ENCODE measurements at regions of chr3 and their contacts with region 1.

Region 1: GRCh38 chr3:183527428-183528379 is 27.8 kb downstream of the KLHL6 start:
- DNase-seq: peak; percentile 60
- ATAC-seq: peak; percentile 89
- H3K4me3 Mint-ChIP-seq: peak overlapping the region; percentile 43
- H3K27ac Mint-ChIP-seq: peak overlapping the region; percentile 84
- H3K4me1 Mint-ChIP-seq: peaks cover 43% of the 10 kb centered on the region
- H3K27me3 Mint-ChIP-seq: no peaks in the 10 kb centered on the region

Region 2: GRCh38 chr3:183515968-183516851 is 11.5 kb before region 1 on chr3:
- CTCF ChIA-PET with region 1: interaction called, 15 read pairs
- POLR2A ChIA-PET with region 1: interaction called, 8 read pairs
- DNase-seq: peak; percentile 82
- ATAC-seq: peak; percentile 76
- H3K4me3 Mint-ChIP-seq: peak overlapping the region; percentile 46
- H3K27ac Mint-ChIP-seq: peak overlapping the region; percentile 84
- H3K4me1 Mint-ChIP-seq: peaks cover 73% of the 10 kb centered on the region
- H3K27me3 Mint-ChIP-seq: no peaks in the 10 kb centered on the region